Mammary epithelial cell (primary cell): ENCODE measurements at regions of chr6 and their contacts with region 1.

Region 1: GRCh38 chr6:163147994-163148393 is 266.5 kb upstream of the QKI start:
- DNase-seq: no peak
- H3K4me3 ChIP-seq: no peak overlapping the region
- H3K27ac ChIP-seq: no peak overlapping the region
- H3K4me1 ChIP-seq: no peaks in the 10 kb centered on the region
- H3K27me3 ChIP-seq: no peaks in the 10 kb centered on the region
- CTCF ChIP-seq: no peak

Region 2: GRCh38 chr6:163085861-163086623 is 62.0 kb before region 1 on chr6:
- CTCF ChIA-PET with region 1: no interaction called
- dilution Hi-C with region 1: loop called (anchors 5 kb)
- in situ Hi-C with region 1: no loop called
- intact Hi-C with region 1: no loop called
- DNase-seq: no peak
- H3K4me3 ChIP-seq: no peak overlapping the region
- H3K27ac ChIP-seq: no peak overlapping the region
- H3K4me1 ChIP-seq: no peaks in the 10 kb centered on the region
- H3K27me3 ChIP-seq: no peaks in the 10 kb centered on the region
- CTCF ChIP-seq: no peak